Right ventricle myocardium inferior (tissue), 1 donor: ENCODE measurements at regions of chr2 and their contacts with region 1.

Region 1: GRCh38 chr2:207473049-207473930 is 56.5 kb upstream of the CREB1 start:
- DNase-seq: peak; percentile 45
- ATAC-seq: peak; percentile 70

Region 2: GRCh38 chr2:206693399-206694137 is 779.7 kb before region 1 on chr2:
- intact Hi-C with region 1: loop called (anchors 2 kb)
- DNase-seq: no peak
- ATAC-seq: no peak

Region 3: GRCh38 chr2:206800506-206801417 is 672.5 kb before region 1 on chr2:
- intact Hi-C with region 1: loop called (anchors 1 kb)
- DNase-seq: peak; percentile 51
- ATAC-seq: peak; percentile 70

Region 4: DNA sequence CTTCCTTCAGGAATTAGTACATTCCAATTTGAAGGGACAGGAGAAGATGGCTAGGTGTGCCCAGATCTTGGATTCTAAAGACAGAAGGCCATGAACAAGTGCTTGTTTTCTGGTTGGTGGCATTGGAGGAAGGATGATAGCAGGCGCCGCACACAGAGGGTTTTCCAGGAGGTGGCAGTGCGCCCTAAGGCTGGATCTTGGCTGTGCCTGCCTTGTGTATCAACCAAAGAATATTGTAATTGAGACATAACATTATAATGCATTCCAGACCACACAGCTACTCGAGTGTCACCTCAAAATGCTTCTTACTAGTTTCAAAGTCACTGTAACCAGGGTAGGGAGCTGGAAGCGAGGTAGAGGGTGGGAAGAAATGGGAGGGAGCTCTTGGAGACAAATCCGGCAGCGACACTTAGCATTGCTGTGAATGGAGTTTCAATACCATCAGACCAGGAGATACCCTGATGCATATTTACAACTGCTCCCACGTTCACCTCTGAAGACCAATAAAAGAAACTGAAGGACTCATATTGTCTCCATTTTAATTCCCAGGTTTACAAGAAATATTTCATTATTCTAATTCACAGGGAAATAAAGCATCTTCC is 491.4 kb before region 1 on chr2:
- intact Hi-C with region 1: loop called (anchors 1 kb)
- DNase-seq: peak; percentile 69
- ATAC-seq: peak; percentile 83

Region 5: DNA sequence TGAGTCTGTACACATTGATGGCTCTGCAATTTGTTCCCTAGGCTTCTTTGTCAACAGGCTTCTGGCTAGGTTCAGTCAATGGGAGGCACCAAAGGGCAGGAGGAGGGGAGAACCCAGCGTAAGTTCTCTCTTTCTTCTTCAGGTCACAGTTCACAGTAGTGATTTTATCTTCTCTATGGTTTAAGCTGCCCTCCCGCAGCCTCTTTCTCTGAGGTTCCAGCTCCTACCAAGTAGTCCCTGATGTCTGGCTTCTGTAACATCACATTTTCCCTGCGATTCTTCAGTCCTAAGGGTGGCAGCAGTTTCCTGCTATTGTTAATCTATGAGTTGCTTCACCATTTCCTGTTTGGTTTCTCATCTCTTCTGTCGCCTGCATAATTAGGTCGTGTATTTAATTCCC is 426.6 kb before region 1 on chr2:
- intact Hi-C with region 1: loop called (anchors 2 kb)
- DNase-seq: no peak
- ATAC-seq: peak; percentile 76

Region 6: GRCh38 chr2:207227062-207227748 is 246.1 kb before region 1 on chr2:
- intact Hi-C with region 1: loop called (anchors 5 kb)
- DNase-seq: no peak
- ATAC-seq: peak; percentile 43

Region 7: DNA sequence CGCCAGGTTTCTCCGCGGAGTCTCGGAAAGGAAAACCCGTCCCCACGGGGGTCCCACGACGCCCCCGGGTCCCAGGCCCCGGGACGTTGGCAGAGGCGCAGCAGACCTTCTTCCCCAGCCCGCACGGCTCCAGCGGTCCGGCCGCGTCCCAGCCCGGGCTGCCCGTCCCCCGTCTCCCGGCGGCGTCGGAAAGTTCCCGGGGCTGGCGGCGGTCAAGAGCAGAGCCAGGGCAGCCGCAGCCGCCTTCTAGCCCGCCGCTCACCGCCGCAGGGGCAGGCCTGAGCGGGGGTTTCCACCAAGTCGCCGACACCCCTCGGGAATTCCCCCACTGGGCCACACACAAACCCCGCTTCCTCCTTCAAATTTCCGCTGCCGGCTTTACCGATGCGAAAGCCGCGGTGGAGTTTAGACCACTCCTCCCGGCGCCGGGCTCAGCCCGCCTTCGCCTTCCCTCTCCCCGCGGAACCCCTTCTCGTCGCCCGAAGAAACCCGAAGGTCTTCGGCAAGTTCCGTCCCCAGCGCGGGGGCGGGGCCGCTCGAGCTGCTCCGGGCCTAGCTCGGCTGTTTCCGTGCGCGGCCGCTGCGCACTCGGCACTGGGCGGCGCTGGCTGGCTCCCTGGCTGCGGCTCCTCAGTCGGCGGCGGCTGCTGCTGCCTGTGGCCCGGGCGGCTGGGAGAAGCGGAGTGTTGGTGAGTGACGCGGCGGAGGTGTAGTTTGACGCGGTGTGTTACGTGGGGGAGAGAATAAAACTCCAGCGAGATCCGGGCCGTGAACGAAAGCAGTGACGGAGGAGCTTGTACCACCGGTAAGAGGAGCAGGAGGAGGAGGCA is 56.3 kb after region 1 on chr2 and contains the start of gene CREB1:
- intact Hi-C with region 1: no loop called
- DNase-seq: peak; percentile 100
- ATAC-seq: peak; percentile 98
- total RNA-seq, gene CREB1: 57.0 TPM